Common myeloid progenitor, CD34-positive (primary cell): ENCODE measurements at regions of chr6 and their contacts with region 1.

Region 1: GRCh38 chr6:89371849-89372505 is 19.5 kb upstream of the UBE2J1 start:
- DNase-seq: peak; percentile 85 to 90 (median 86)
- H3K4me3 ChIP-seq: no peak overlapping the region
- H3K27ac ChIP-seq: no peak overlapping the region
- H3K4me1 ChIP-seq: peaks cover 15 to 37% (median 27%) of the 10 kb centered on the region in 4 experiments
- H3K27me3 ChIP-seq: no peaks in the 10 kb centered on the region

Region 2: GRCh38 chr6:89352278-89353117 is 19.5 kb before region 1 on chr6 and contains the start of gene UBE2J1:
- CTCF ChIA-PET with region 1: interaction called, 102 read pairs
- POLR2A ChIA-PET with region 1: interaction called, 3 read pairs
- DNase-seq: peak; percentile 78 to 91 (median 86)
- H3K4me3 ChIP-seq: peak within 1 kb of the TSS; percentile 79 to 98 (median 91)
- H3K27ac ChIP-seq: peak within 1 kb of the TSS; percentile 90 to 96
- H3K4me1 ChIP-seq: peaks cover 39 to 79% (median 69%) of the 10 kb centered on the region in 4 experiments
- H3K27me3 ChIP-seq: no peaks in the 10 kb centered on the region

Region 3: DNA sequence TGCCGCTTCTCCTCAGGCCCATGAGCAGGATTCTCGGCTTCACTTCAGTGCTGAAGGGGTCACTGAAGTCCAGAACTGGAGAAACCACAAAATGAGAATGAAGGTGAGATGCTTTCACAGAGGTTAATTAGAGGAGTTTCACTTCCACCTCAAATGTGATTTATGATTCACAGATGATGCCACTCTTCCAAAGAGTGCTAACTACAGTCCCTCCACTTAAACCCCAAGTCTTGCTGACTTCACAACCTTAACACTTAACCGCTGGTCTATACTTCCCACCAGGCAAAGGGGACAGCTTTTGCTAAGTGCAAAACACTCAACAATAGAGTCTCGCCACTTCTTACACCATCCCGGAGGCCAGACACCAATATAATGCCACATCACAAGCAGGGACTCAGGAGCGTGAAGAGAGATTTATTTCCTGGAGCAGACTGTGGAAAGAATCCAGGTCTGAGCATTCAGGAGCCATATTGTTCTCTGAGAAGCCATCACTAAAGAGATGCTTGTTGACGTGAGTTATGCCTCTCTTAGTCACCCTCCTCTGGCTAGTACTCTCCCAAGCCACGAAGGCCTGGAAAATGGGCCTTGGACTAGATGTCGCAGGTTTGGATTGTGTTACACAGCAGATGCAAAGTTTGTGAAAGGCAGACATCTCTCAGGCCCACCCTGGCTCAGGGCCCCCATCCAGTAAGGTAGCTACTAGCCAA is 15.7 kb after region 1 on chr6:
- CTCF ChIA-PET with region 1: interaction called, 10 read pairs
- POLR2A ChIA-PET with region 1: no interaction called
- DNase-seq: no peak
- H3K4me3 ChIP-seq: no peak overlapping the region
- H3K27ac ChIP-seq: no peak overlapping the region
- H3K4me1 ChIP-seq: no peaks in the 10 kb centered on the region
- H3K27me3 ChIP-seq: no peaks in the 10 kb centered on the region

Region 4: DNA sequence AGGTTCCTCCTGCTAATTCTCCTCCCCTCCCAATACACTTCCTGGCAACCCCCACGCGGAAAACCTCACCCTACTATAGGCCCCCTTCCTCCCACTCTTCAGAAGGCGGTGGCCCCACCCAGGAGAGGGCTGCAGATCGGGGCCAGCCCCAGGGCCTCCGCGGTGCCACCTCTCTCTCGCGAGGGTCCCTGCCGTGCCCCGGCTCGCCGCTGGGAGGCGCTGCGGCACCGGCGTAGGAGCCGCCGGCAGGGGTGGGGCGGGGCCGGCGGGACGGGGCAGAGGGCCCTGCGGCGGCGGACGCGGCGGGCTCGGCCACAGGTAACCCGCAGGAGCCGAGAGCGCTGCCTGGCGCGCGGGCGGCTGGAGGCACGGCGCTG is 60.9 kb after region 1 on chr6 and contains the start of gene ANKRD6:
- CTCF ChIA-PET with region 1: interaction called, 17 read pairs
- POLR2A ChIA-PET with region 1: no interaction called
- DNase-seq: peak; percentile 72 to 78 (median 75)
- H3K4me3 ChIP-seq: peak within 1 kb of the TSS; percentile 63 to 83 (median 73)
- H3K27ac ChIP-seq: no peak within 1 kb of the TSS
- H3K4me1 ChIP-seq: peaks cover 0 to 23% (median 14%) of the 10 kb centered on the region in 4 experiments
- H3K27me3 ChIP-seq: no peaks in the 10 kb centered on the region

Region 5: GRCh38 chr6:89610149-89610642 is 238.2 kb after region 1 on chr6:
- CTCF ChIA-PET with region 1: interaction called, 15 read pairs
- POLR2A ChIA-PET with region 1: no interaction called
- DNase-seq: peak; percentile 65 to 82 (median 76)
- H3K4me3 ChIP-seq: no peak overlapping the region
- H3K27ac ChIP-seq: no peak overlapping the region
- H3K4me1 ChIP-seq: peaks cover 0 to 10% (median 0%) of the 10 kb centered on the region in 4 experiments
- H3K27me3 ChIP-seq: no peaks in the 10 kb centered on the region